Tibial artery (tissue), 4 donors: ENCODE measurements at regions of chr3 and their contacts with region 1.

Region 1: GRCh38 chr3:48847504-48848423 is at the start of gene PRKAR2A:
- DNase-seq: peak; percentile 88 to 94
- H3K4me3 ChIP-seq: peak within 1 kb of the TSS; percentile 66 to 94
- H3K27ac ChIP-seq: peak within 1 kb of the TSS; percentile 86 to 98
- H3K4me1 ChIP-seq: peaks cover 0 to 29% (median 23%) of the 10 kb centered on the region in 4 donors
- H3K27me3 ChIP-seq: no peaks in the 10 kb centered on the region
- CTCF ChIP-seq: no peak

Region 2: GRCh38 chr3:48918388-48919214 is 70.8 kb after region 1 on chr3 and contains the start of gene ARIH2:
- intact Hi-C with region 1: loop called (anchors 2 kb)
- DNase-seq: peak; percentile 89 to 95
- H3K4me3 ChIP-seq: peak within 1 kb of the TSS; percentile 79 to 90
- H3K27ac ChIP-seq: peak within 1 kb of the TSS; percentile 92 to 96
- H3K4me1 ChIP-seq: peaks cover 0 to 30% (median 22%) of the 10 kb centered on the region in 4 donors
- H3K27me3 ChIP-seq: no peaks in the 10 kb centered on the region
- CTCF ChIP-seq: no peak